ENCODE measurements at regions of chr10 and their contacts with region 1.

Region 1: DNA sequence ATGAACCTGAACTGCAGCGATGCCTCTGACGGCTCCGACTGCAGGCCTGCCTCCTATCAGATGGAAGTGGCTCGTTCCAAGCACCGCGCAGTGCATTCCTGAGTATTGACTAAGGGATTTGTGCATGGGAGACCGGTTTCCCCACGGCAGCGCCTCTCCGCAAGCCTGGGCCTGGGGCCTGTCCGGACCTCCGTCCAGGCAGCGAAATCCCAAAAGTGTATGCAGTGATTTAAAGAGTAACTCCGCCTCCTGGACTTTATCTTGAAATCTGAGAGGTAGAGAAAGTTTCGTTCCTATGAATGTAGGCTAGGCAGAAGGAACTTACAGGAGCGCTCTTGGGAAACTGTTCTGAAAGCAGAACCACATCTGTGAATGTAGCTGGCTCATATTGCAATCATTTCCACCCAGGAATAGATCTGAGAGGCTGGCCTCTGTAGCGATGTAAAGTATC is 106.2 kb upstream of the CELF2 start:
- DNase-seq: peak; percentile 51 to 80 (median 74)
- ATAC-seq: peak; percentile 43 to 84 (median 77)
- H3K4me3 ChIP-seq: peak overlapping the region in 10 of 12 donors; percentile 12 to 47 (median 30)
- H3K27ac ChIP-seq: peak overlapping the region; percentile 58 to 92 (median 80)
- H3K4me1 ChIP-seq: peaks cover 0 to 45% (median 16%) of the 10 kb centered on the region in 12 donors
- H3K27me3 ChIP-seq: no peaks in the 10 kb centered on the region
- CTCF ChIP-seq: no peak
- POLR2A ChIP-seq: no peak

Region 2: GRCh38 chr10:10786109-10787090 is 125.1 kb before region 1 on chr10:
- intact Hi-C with region 1: loop called in 3 of 10 experiments (anchors 5 to 10 kb)
- DNase-seq: no peak
- ATAC-seq: no peak
- H3K4me3 ChIP-seq: no peak overlapping the region
- H3K27ac ChIP-seq: peak overlapping the region in 2 of 12 donors; percentile 24 to 46
- H3K4me1 ChIP-seq: peaks cover 0 to 20% (median 3%) of the 10 kb centered on the region in 12 donors
- H3K27me3 ChIP-seq: no peaks in the 10 kb centered on the region
- CTCF ChIP-seq: no peak
- POLR2A ChIP-seq: no peak

Region 3: DNA sequence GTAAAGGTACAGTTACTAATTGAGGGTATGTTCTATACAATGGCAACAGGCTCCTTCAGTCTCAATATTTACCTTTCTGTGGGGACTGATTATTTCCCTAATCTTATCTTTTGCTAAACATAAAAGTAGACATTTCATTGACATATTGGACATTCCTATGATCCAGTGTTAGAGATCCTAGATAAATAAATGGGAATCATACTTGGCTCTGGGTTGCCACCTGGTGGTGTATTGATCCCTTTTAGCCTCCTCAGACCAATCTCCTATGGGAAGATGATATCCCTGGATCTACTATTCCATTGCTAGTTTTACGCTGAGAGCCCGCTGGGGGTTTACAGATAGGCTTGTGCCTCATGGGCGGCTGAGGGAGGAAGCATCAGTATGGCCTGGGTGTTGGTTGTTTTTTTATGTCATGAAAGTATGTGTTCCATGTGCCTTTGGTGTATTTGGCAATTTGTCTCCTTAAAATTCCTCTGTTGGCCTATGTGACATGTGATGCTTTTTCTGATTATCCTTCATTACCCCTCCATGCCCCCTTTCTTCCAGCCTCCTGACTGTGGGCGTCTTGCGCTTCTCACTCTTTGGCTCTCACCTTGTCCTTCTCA is 125.0 kb after region 1 on chr10:
- intact Hi-C with region 1: no loop called
- DNase-seq: peak in 1 of 5 donors; percentile 37
- ATAC-seq: peak; percentile 50 to 60 (median 59)
- H3K4me3 ChIP-seq: no peak overlapping the region
- H3K27ac ChIP-seq: peak overlapping the region in 8 of 12 donors; percentile 4 to 88 (median 65)
- H3K4me1 ChIP-seq: peaks cover 7 to 59% (median 32%) of the 10 kb centered on the region in 12 donors
- H3K27me3 ChIP-seq: no peaks in the 10 kb centered on the region
- CTCF ChIP-seq: peak; percentile 35 to 75 (median 65)
- POLR2A ChIP-seq: no peak